ENCODE measurements at regions of chr2 and their contacts with region 1.

Region 1: DNA sequence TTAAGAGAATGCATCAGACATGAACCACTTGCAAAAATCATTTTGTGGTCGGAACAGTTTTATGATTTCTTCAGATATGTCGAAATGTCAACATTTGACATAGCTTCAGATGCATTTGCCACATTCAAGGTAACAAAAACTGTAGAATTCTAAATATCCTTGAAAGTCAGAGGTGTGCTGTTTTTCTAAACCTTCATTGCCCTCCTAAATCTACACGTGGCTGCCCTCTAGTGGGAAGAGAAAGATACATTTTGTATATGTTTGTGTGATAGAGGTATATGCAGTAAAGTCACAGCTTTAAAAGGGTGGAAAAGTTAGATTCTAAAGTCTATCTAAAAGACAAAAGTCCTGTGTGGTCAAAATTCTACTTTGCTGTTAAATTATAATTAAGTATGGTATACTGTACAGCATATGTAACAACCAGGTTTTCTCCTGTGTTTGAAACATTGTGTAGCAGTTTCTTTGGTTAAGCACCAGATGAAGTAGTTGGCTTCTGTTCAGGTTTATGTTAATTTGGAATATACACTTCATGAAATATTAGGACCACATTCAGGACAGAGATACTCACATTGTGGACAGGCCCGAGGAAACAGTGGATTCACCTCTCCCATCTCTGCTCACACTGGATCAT is 65.9 kb upstream of the ITM2C start:
- DNase-seq: peak in 8 of 10 donors; percentile 22 to 73 (median 62)
- ATAC-seq: peak; percentile 29 to 50
- H3K4me3 Mint-ChIP-seq: peak overlapping the region in 2 of 10 donors; percentile 6 to 48
- H3K27ac Mint-ChIP-seq: peak overlapping the region in 3 of 10 donors; percentile 37 to 84 (median 50)
- H3K4me1 Mint-ChIP-seq: peaks cover 17 to 29% (median 22%) of the 10 kb centered on the region in 4 donors
- H3K27me3 Mint-ChIP-seq: no peaks in the 10 kb centered on the region

Region 2: GRCh38 chr2:230179907-230180306 is 619.0 kb before region 1 on chr2:
- POLR2A ChIA-PET with region 1: interaction called, 11 read pairs
- DNase-seq: no peak
- ATAC-seq: no peak
- H3K4me3 Mint-ChIP-seq: no peak overlapping the region
- H3K27ac Mint-ChIP-seq: peak overlapping the region in 6 of 10 donors; percentile 7 to 75 (median 60)
- H3K4me1 Mint-ChIP-seq: peaks cover 0 to 10% (median 3%) of the 10 kb centered on the region in 4 donors
- H3K27me3 Mint-ChIP-seq: no peaks in the 10 kb centered on the region

Region 3: DNA sequence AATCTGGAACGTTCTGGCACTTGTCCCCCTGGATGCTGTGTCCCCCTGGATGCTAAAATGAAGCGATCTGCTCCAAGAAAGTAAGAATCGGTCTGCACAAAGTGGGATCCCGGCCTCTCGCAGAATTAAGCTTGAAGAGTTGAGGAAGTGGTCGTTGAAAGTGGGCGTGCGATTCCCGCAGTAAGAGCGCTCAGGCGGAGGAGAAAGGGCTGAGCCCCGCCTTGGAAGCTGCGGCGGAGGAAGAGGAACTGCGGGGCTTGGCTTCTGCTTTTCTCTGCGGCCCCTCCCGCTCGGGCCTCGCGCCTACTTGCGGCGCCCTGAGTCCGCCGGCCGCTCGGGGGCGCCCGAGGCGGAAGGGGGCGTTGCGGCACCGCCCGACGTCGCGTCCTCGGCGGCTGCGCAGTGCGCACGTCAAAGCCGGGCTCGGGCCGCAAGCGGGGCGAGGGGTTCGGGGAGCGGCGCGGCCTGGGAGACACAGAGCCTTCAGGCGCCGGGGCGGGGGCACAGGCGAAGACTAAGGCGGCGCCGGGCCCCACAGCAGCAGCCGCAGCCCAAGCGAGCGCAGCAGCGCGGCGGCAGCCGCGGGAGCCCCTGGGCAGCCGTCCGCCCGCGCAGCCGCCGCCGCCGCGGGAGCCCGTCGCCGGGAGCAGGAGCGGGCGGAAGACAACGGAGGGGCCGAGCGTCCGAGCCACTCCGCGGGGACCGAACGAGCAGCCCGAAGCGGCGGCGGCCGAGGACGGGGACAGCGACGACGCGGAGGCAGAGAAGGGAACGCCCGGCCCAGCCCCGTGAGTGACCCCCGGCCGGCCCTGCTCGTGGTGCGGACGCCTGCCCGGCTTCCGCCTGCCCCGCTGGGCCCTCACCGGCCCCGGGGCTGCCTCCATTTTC is 86.2 kb before region 1 on chr2 and contains the start of gene CAB39:
- POLR2A ChIA-PET with region 1: interaction called, 24 read pairs
- DNase-seq: peak; percentile 82 to 94 (median 89)
- ATAC-seq: peak; percentile 83 to 84
- H3K4me3 Mint-ChIP-seq: peak within 1 kb of the TSS; percentile 97 to 99 (median 98)
- H3K27ac Mint-ChIP-seq: peak within 1 kb of the TSS; percentile 94 to 98 (median 97)
- H3K4me1 Mint-ChIP-seq: peaks cover 26 to 52% (median 47%) of the 10 kb centered on the region in 4 donors
- H3K27me3 Mint-ChIP-seq: no peaks in the 10 kb centered on the region
- polyA plus RNA-seq, gene CAB39: 62.5 to 81.5 (median 67.1) TPM

Region 4: DNA sequence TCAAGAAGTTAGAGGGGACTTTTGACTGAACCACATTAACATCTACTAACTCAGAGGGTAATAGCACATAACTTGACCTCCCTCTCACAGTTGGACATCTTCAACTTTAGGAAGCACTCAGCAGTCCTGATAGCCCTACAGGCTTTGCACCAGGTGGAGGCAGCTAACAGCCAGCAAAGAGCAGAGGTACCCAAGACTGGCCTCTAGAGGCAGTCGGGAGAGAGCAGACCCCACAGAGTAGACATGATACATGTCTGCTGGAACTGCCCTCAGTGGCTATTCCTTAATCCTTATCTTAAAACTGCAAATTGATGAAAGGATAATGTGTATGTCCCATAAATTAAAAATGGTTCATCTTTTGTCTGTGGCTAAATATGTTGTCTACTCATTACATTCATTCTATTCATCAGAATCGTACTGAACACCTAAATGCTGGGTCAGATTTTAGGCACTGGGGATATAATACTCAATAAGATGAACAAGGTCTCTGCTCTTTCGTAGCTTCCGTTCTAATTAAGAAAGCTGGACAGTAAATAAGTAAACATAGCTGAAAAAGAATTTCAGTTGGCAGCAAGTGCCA is 36.5 kb before region 1 on chr2:
- POLR2A ChIA-PET with region 1: no interaction called
- DNase-seq: peak in 7 of 10 donors; percentile 15 to 71 (median 25)
- ATAC-seq: peak; percentile 96 to 99
- H3K4me3 Mint-ChIP-seq: no peak overlapping the region
- H3K27ac Mint-ChIP-seq: peak overlapping the region in 3 of 10 donors; percentile 15 to 41 (median 39)
- H3K4me1 Mint-ChIP-seq: peaks cover 34 to 64% (median 47%) of the 10 kb centered on the region in 4 donors
- H3K27me3 Mint-ChIP-seq: no peaks in the 10 kb centered on the region

Region 5: DNA sequence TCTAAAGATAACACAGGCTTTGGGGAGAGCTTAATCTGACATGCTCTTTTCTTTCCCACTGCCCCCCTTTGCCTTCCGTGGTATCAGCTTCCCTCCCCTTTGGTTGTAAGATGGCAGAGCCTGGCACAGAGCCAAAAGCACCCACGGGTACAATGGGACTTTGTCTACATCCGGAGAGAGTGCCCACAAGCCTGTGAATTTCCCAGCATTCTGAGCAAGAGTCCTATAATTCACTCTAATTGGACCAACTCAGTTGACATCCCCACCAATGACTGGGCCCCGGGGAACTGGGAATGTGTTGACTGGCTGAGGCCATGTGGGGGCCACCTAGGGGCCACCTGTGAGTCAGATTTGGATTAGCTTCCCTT is 218.3 kb after region 1 on chr2:
- POLR2A ChIA-PET with region 1: no interaction called
- DNase-seq: no peak
- ATAC-seq: no peak
- H3K4me3 Mint-ChIP-seq: no peak overlapping the region
- H3K27ac Mint-ChIP-seq: no peak overlapping the region
- H3K4me1 Mint-ChIP-seq: peaks cover 0 to 4% (median under 1%) of the 10 kb centered on the region in 4 donors
- H3K27me3 Mint-ChIP-seq: peaks cover 5 to 21% (median 11%) of the 10 kb centered on the region in 5 donors